ENCODE measurements at regions of chr5 and their contacts with region 1.

Region 1: DNA sequence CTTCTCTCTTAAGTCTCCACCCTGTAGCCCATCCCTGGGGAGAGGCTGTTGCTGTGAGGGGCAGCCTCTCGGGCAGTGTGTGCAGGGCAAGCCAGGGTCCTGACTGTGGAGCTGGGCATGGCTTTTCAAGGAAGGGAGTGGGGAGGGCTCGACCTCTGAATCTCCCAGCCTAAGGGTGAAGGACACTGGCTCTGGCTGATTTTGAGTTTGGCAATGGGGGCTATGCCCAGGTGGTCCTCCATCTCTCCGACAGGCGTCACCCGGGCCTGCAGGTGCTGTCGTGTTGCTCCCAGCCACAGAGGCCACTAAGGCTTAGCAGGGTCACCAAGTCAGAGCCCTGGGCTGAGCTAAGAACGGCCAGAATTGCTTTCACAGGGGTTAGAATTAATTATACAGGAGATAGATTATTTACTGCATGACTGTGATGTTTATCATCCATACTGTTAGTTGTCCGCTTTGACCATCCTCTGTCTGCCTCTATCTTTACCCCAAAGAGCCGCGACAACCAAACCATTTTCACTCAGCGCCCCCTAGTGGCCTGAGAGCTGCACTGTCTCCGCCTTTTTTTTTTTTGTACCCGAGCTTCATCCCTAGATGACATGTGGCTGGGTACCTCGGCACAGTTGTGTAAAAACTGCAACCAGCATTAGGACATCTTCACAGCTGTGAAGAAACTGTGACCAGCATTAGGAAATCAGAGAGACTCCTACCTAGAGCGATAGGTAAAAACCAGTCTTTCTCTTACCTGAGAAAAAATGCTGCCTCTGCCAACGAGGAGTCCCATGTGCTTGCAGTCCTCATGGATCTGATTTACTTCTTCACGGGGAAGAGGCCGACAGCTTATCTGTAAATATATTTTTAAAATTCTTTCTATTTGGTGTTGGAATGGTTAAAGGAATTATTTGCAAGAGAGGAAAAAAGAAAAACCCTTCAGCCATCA is 44.5 kb downstream of the AGXT2 start:
- DNase-seq: peak; percentile 33
- ATAC-seq: peak; percentile 82
- H3K4me3 ChIP-seq: no peak overlapping the region
- H3K27ac ChIP-seq: no peak overlapping the region
- H3K4me1 ChIP-seq: no peaks in the 10 kb centered on the region
- H3K27me3 ChIP-seq: peaks cover 2% of the 10 kb centered on the region; the same call in 1 of the 2 replicates
- CTCF ChIP-seq: peak; percentile 95

Region 2: GRCh38 chr5:34486160-34486848 is 517.0 kb before region 1 on chr5:
- CTCF ChIA-PET with region 1: no interaction called
- POLR2A ChIA-PET with region 1: no interaction called
- in situ Hi-C with region 1: no loop called
- intact Hi-C with region 1: loop called (anchors 5 kb)
- DNase-seq: peak; percentile 78
- ATAC-seq: peak; percentile 86
- H3K4me3 ChIP-seq: no peak overlapping the region
- H3K27ac ChIP-seq: no peak overlapping the region
- H3K4me1 ChIP-seq: no peaks in the 10 kb centered on the region
- H3K27me3 ChIP-seq: no peaks in the 10 kb centered on the region
- CTCF ChIP-seq: peak; percentile 90

Region 3: DNA sequence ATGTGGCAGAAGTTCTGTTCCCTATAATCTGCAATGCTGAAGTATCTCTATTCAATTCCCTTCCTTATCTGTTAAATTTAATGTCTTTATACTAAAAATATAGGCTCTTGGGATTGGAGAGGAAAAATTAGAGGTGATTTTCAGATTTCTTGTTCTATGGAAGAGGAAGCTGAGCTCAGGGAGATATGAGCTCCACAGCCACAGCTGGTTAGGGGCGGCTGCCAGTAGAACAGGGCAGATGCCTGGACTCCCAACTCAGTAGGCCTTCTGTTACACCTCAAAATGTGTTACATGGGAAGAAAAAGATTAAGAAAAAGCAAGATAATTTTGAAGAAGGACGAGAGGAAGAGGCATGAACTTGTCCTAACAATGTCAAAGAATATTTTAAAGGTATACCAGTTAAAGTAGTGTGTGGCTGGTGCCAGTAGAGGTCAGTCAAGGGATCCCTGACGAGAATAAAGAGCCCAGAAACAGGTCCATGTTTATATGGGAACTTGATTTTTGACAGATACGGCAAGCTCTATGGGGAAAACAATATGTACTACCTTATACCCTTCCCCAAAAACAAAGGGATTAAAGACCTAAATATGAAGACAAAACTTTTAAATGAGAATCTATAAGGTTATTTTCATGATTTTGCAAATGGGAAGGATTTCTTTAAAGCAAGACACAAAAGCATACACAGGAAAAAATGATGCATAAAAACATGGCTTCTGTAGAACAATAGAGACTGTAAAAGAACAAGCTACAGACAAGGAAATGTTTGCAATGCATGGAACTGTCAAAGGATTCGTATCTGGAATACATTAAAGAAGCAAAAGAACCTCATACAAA is 45.2 kb before region 1 on chr5:
- CTCF ChIA-PET with region 1: no interaction called
- POLR2A ChIA-PET with region 1: no interaction called
- in situ Hi-C with region 1: no loop called
- intact Hi-C with region 1: loop called (anchors 5 kb)
- DNase-seq: peak; percentile 15
- ATAC-seq: peak; percentile 81
- H3K4me3 ChIP-seq: no peak overlapping the region
- H3K27ac ChIP-seq: no peak overlapping the region
- H3K4me1 ChIP-seq: no peaks in the 10 kb centered on the region
- H3K27me3 ChIP-seq: no peaks in the 10 kb centered on the region
- CTCF ChIP-seq: peak; percentile 75

Measured in Panc1 (cell line).